ENCODE measurements at regions of chr3 and their contacts with region 1.

Region 1: DNA sequence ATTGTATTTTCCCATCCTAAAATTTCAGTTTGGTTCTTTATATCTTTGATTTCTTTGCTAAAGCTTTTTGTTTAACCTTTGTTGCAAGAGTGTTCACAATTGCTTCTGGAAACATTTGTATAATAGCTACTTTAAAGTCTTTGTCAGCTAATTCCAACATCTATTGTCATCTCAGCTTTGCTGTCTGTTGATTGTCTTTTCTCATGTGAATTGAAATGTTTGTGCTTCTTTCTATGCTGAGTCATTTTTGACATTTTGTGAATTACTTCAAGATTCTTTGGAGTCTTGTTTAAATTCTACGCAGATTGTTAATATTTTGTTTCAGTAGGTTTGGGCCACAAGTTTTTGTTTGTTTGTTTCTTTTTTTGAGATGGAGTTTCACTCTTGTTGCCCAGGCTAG is 73.2 kb downstream of the SUCNR1 start:
- DNase-seq: peak; percentile 39
- ATAC-seq: peak; percentile 29; the same call in 1 of the 2 replicates
- H3K4me3 ChIP-seq: no peak overlapping the region
- H3K27ac ChIP-seq: no peak overlapping the region
- H3K4me1 ChIP-seq: peaks cover 1% of the 10 kb centered on the region
- H3K27me3 ChIP-seq: no peaks in the 10 kb centered on the region
- CTCF ChIP-seq: no peak
- POLR2A ChIP-seq: no peak
- RAD21 ChIP-seq: no peak

Region 2: GRCh38 chr3:151960961-151961579 is 14.5 kb after region 1 on chr3:
- CTCF ChIA-PET with region 1: no interaction called
- POLR2A ChIA-PET with region 1: no interaction called
- dilution Hi-C with region 1: no loop called
- in situ Hi-C with region 1: no loop called
- intact Hi-C with region 1: loop called (anchors 2 kb)
- DNase-seq: peak; percentile 35
- ATAC-seq: no peak
- H3K4me3 ChIP-seq: no peak overlapping the region
- H3K27ac ChIP-seq: no peak overlapping the region
- H3K4me1 ChIP-seq: no peaks in the 10 kb centered on the region
- H3K27me3 ChIP-seq: no peaks in the 10 kb centered on the region
- CTCF ChIP-seq: no peak
- POLR2A ChIP-seq: no peak
- RAD21 ChIP-seq: no peak

Region 3: DNA sequence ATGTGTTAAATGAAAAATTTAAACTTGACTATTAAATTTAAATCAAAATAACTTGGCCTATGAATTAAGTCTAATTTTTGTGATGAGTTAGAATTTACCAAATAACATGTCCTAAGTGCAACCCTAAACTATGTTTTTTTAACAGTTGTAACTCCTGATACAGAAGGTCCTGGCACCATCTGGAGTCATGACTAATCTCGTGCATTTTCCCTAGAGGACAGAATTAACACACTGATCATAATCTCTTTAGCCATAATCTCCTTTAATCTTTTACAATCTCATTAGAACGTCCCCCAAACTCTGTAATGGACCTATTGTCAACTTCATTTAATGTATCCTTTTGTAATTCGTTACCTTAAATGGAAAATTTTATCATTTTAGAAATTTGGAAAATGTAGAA is 27.5 kb after region 1 on chr3:
- CTCF ChIA-PET with region 1: no interaction called
- POLR2A ChIA-PET with region 1: no interaction called
- dilution Hi-C with region 1: no loop called
- in situ Hi-C with region 1: no loop called
- intact Hi-C with region 1: no loop called
- DNase-seq: peak; percentile 36
- ATAC-seq: no peak
- H3K4me3 ChIP-seq: no peak overlapping the region
- H3K27ac ChIP-seq: no peak overlapping the region
- H3K4me1 ChIP-seq: peaks cover 2% of the 10 kb centered on the region; the same call in 1 of the 2 replicates
- H3K27me3 ChIP-seq: no peaks in the 10 kb centered on the region
- CTCF ChIP-seq: no peak
- POLR2A ChIP-seq: no peak
- RAD21 ChIP-seq: no peak

Region 4: GRCh38 chr3:152524198-152525140 is 577.9 kb after region 1 on chr3:
- CTCF ChIA-PET with region 1: no interaction called
- POLR2A ChIA-PET with region 1: no interaction called
- dilution Hi-C with region 1: no loop called
- in situ Hi-C with region 1: no loop called
- intact Hi-C with region 1: loop called (anchors 10 kb)
- DNase-seq: peak; percentile 62
- ATAC-seq: peak; percentile 77
- H3K4me3 ChIP-seq: no peak overlapping the region
- H3K27ac ChIP-seq: no peak overlapping the region
- H3K4me1 ChIP-seq: no peaks in the 10 kb centered on the region
- H3K27me3 ChIP-seq: no peaks in the 10 kb centered on the region
- CTCF ChIP-seq: peak; percentile 77
- POLR2A ChIP-seq: no peak
- RAD21 ChIP-seq: peak; percentile 70